ENCODE measurements at regions of chr16 and their contacts with region 1.

Region 1: DNA sequence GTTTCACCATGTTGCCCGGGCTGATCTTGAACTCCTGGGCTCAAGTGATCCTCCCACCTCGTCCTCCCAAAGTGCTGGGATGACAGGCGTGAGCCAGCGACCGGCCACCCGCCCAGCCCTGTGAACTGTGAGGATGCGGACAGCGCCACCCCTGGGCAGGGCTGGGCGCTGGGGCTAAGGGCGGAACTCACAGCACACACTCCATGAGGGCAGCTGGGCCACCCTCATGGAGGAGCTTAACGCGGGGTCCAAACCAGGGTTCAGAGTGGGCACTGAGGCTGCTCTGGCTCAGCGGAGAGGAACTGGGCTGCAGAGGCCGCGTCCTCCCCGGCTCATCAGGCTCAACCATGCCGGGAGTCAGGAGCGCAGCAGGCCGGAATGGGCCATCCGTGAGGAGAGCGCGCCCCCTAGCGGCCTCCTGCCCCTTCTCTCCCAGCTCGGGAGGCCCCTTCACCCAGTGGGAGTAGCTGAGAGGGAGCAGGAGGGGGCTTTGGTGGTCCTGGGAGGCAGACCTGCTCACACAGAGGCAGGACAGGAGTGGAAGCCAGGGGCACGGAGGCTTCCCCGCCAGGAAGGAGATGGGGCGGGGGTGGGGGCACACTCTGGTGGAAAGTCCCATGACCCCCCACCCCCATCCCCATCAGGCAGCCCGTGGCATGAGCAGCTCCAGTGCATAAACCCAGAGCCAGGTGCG is 13.8 kb downstream of the CORO7 start:
- DNase-seq: peak; percentile 72
- ATAC-seq: peak; percentile 57
- H3K4me3 Mint-ChIP-seq: no peak overlapping the region
- H3K27ac Mint-ChIP-seq: no peak overlapping the region
- H3K4me1 Mint-ChIP-seq: peaks cover 5% of the 10 kb centered on the region
- H3K27me3 Mint-ChIP-seq: no peaks in the 10 kb centered on the region

Region 2: DNA sequence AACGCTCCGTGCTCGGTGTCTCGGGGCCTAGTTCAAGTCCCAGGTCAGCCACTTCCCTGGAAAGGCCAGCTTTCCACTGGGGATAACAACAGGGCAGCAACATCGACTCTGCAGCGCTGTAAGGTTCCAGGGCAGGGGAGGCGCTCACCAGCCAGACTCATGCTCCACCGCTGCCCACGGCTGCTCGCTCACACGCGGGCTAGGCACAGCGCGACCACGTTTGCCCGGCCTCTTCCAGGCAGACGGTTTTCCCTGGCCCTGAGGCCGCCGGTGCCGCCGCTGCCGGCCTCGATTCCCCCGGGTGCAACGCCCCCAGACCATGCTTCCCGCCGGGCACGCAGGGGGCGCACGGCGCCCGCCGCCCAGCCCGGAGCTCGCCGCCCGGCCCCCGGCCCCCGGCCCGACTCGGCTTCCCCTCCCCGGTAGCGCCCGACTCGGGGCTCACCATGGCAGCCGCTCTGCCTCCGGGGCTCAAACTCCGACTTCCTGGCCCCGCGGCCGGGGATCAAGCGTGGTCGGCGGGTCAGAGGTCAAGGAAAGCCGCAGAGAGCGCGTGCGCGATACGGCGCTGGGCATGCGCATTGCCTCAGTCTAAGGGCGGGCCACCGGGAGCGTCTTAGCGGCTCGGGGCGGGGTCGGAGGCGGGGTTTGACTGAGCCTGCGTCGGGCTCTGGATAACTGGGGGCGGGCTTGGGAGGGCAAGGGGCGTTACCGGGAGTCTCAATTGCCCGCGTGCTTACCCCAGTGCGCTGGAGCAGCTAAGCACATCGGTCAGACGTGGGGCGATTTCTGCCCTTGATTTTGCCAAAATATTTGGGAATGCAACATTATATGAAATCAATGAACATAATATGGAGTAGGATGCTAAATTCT is 51.6 kb before region 1 on chr16 and contains the start of gene PAM16:
- CTCF ChIA-PET with region 1: interaction called, 16 read pairs
- POLR2A ChIA-PET with region 1: interaction called, 3 read pairs
- DNase-seq: peak; percentile 98
- ATAC-seq: peak; percentile 95
- H3K4me3 Mint-ChIP-seq: peak within 1 kb of the TSS; percentile 98
- H3K27ac Mint-ChIP-seq: peak within 1 kb of the TSS; percentile 92
- H3K4me1 Mint-ChIP-seq: peaks cover 17% of the 10 kb centered on the region
- H3K27me3 Mint-ChIP-seq: no peaks in the 10 kb centered on the region
- total RNA-seq, gene PAM16: 33.3 to 40.3 TPM

Region 3: GRCh38 chr16:4358831-4359561 is 43.6 kb before region 1 on chr16:
- CTCF ChIA-PET with region 1: interaction called, 23 read pairs
- POLR2A ChIA-PET with region 1: no interaction called
- DNase-seq: peak; percentile 68
- ATAC-seq: peak; percentile 69
- H3K4me3 Mint-ChIP-seq: no peak overlapping the region
- H3K27ac Mint-ChIP-seq: peak overlapping the region; percentile 55
- H3K4me1 Mint-ChIP-seq: no peaks in the 10 kb centered on the region
- H3K27me3 Mint-ChIP-seq: no peaks in the 10 kb centered on the region

Region 4: DNA sequence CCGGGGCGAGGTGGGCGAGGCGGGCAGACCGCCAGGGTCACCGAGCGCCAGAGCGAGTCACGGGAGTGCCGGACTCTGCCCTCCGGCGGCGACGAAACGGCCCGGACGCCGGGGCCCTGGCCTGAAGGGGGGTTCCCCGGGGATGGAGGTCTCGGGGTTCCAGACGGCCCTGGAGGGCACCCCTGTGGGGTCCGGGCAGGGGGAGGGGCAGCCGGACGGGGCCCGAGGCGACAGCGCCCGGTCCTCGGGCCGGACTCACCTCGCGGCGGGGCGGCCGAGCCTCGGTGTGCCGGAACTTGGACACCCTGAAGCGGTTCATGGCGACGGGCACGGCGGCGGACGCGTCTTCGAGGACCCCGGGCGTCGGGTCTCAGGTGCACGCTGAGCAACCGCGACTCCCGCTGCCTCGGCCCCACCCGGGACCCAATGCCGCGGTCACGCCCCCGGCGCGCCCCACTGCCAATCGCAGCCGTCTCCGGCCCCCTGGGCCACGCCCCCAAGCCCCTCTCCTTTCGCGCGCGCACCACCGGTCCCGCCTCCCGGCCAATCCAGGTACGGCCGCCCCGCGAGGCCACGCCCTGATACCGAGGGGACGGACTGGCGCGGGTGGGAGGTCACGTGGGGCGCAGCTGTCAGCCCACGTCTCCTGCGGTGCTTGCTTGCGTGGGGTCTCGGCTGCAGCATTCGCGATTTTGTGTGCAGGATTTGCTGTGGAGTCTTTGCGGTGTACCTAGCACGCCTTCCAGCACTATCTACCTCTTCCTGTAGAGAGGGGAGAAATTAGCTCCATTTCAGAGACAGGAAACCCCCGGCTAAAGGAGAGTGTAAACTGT is 13.8 kb after region 1 on chr16 and contains the start of gene CORO7:
- CTCF ChIA-PET with region 1: interaction called, 40 read pairs
- POLR2A ChIA-PET with region 1: interaction called, 8 read pairs
- DNase-seq: peak; percentile 99
- ATAC-seq: peak; percentile 77
- H3K4me3 Mint-ChIP-seq: peak within 1 kb of the TSS; percentile 86
- H3K27ac Mint-ChIP-seq: peak within 1 kb of the TSS; percentile 95
- H3K4me1 Mint-ChIP-seq: peaks cover 39% of the 10 kb centered on the region
- H3K27me3 Mint-ChIP-seq: peaks cover 2% of the 10 kb centered on the region
- total RNA-seq, gene CORO7: 167 to 176 TPM